ENCODE measurements at regions of chr5 and their contacts with region 1.

Region 1: DNA sequence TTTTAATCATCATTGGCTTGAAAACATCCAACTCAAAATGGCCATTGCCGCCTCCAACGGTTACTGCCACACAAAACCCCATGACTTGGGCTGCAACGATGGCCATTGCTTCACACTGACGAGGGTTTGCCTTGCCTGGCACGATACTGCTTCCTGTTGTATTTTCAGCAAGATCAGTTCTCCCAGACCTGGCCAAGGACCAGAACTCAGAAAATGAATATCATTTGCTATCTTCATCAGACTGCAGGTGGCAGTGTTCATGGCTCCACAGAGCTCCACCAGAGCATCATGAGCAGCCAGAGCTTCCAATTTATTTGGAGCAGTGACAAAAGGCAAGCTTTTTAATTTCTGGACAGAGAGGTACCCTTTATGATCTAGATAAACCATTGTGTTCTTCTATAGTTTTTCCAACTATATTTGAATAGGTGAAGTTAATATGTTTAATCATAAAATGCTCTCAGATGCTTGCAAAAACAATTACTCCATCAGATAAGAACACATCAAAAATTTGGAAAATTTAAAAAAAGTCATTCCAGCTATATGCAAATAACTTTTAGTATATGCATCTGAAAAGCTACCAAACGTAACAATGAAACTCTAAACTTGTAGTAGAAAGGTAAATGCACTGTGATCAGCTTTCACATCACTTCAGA is 10.4 kb downstream of the AMACR start:
- DNase-seq: peak; percentile 58
- H3K4me3 ChIP-seq: no peak overlapping the region; a peak in 1 of 4 replicates
- H3K27ac ChIP-seq: peak overlapping the region in 1 of 2 experiments; percentile 47; a peak in 1 of 4 replicates
- H3K4me1 ChIP-seq: peaks cover 4 to 5% of the 10 kb centered on the region in 2 experiments; a peak in 2 of 4 replicates
- H3K27me3 ChIP-seq: no peaks in the 10 kb centered on the region
- CTCF ChIP-seq: peak; percentile 75
- EP300 ChIP-seq: no peak
- RAD21 ChIP-seq: peak; percentile 74

Region 2: DNA sequence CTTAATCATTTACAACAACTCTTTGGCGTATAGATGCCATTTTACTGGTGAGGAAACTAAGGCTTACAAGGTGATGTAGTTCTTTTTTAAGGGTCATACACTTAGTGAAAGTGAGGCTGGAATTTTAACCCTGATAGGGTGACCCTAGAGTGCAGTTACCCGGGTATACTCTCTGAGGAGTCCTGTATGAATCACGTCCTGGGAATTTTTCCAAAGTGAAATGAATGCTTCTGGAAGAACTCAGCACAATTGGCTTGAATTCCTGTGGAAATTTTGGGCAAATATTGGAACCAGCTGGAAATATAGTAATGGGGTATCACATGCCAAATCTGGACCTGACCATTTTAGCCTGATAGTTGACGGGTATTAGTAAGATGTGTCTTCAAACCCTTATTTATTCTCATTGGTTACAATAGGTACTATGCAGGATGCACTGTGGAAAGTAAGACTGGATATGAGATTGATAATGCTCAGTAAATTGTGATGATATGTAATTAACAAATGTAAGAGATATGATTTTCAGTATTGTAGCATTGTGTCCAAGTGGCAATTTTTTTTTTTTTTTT is 1397.3 kb before region 1 on chr5:
- CTCF ChIA-PET with region 1: no interaction called
- POLR2A ChIA-PET with region 1: no interaction called
- DNase-seq: no peak
- H3K4me3 ChIP-seq: no peak overlapping the region
- H3K27ac ChIP-seq: peak overlapping the region; percentile 81 to 82; a peak in 3 of 4 replicates
- H3K4me1 ChIP-seq: peaks cover 0 to 30% of the 10 kb centered on the region in 2 experiments; a peak in 3 of 4 replicates
- H3K27me3 ChIP-seq: no peaks in the 10 kb centered on the region
- CTCF ChIP-seq: no peak
- EP300 ChIP-seq: peak; percentile 50 to 89; a peak in 3 of 4 replicates
- RAD21 ChIP-seq: no peak

Region 3: DNA sequence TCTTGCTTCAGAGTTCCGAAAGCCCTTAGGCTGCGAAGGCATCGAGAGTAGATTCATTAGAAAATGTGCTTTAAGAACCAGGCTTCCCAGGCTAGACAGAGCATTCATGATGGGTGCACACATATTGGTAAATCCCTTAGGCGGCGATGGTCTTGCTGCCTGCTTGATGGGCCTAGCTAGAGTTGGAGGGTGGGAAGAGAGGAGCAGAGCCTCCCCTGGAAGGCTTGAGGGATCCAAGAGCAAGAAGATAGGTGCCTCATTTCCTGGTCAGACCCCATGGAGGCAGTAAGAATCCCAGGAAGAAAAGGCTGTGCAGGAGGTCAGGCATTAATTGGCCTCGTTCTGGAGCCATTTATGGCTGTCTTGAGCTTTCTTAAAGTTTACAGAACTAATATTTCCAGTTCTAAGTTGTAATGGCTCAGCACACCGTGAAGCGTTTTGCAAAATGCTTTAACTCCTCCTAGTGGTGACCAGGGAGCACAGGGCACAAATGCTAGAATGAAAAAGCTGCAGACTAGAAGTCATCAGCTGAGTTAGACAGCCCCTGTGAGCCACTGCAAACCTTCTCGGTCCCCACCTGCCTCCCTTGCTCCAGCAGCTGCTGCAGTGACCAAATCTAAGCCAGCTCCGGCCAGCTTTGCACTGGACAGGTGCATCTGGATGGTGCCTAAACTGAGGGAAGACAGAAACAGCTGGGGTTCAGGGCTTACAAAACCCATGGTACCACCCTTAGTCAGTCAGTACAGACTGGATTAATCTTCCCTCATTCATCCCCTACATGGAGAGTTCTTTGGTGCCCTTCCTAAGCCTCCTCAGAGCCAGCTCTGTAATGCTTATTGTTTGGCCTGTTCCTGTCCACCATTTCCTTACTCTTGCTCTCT is 27.6 kb before region 1 on chr5:
- CTCF ChIA-PET with region 1: interaction called, 10 read pairs
- POLR2A ChIA-PET with region 1: no interaction called
- DNase-seq: peak; percentile 32
- H3K4me3 ChIP-seq: no peak overlapping the region; a peak in 1 of 4 replicates
- H3K27ac ChIP-seq: no peak overlapping the region
- H3K4me1 ChIP-seq: peaks cover 0 to 7% of the 10 kb centered on the region in 2 experiments; a peak in 1 of 4 replicates
- H3K27me3 ChIP-seq: no peaks in the 10 kb centered on the region
- CTCF ChIP-seq: peak; percentile 68
- EP300 ChIP-seq: no peak
- RAD21 ChIP-seq: peak; percentile 66

Region 4: DNA sequence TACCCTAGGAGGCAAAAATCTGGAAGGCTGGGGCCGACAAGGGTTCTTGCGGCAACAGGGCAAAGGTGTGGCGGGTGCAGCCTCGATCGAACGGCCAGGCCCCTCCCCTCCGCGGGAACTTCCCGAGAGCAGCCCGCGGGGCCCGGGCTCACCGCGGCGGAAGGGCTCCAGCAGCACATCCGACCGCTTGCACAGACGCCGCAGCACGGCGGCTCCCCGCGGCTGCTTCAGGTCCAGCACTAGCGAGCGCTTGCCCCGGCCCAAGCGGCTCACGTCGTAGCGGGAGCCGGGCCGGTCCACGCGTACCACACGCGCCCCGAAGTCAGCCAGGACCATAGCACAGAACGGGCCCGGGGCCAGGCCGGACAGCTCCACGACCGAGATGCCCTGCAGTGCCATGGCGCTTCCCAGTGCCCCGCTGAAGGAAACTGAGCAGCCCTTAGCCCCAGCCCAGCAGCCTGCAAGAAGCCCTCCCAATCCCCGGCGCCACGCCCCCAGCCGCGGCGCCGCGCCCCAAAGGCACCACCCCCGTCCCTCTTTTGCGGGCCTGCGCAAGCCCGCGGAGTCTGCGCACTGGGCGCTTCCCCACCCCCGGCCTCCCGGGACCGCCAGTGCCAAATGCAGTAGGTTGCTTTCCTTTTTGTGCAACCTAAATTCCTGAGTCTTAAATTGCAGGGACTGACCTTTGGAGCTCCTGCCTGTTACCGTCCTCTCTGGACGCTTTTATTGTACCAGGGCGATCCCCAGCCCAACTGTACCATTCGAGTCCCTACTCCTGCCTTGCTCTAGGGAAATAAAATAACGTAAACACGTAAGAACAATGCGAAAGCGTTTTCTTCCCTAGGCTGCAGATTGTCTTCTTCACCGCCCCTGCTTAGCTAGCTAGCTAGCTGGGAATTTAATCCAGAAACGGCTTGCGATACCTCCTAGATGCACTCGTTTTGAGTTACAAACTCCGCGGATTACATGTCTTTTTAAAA is 10.5 kb after region 1 on chr5 and contains the start of gene AMACR:
- CTCF ChIA-PET with region 1: interaction called, 17 read pairs
- POLR2A ChIA-PET with region 1: interaction called, 3 read pairs
- DNase-seq: peak; percentile 93
- H3K4me3 ChIP-seq: peak within 1 kb of the TSS; percentile 84 to 91
- H3K27ac ChIP-seq: peak within 1 kb of the TSS; percentile 89 to 99
- H3K4me1 ChIP-seq: peaks cover 8 to 10% of the 10 kb centered on the region in 2 experiments
- H3K27me3 ChIP-seq: no peaks in the 10 kb centered on the region
- CTCF ChIP-seq: no peak
- EP300 ChIP-seq: no peak
- RAD21 ChIP-seq: no peak
- polyA plus RNA-seq, gene AMACR: 11.8 and 14.0 TPM in 2 replicates

Region 5: GRCh38 chr5:34464830-34465229 is 467.4 kb after region 1 on chr5:
- CTCF ChIA-PET with region 1: interaction called, 13 read pairs
- POLR2A ChIA-PET with region 1: no interaction called
- DNase-seq: no peak
- H3K4me3 ChIP-seq: no peak overlapping the region
- H3K27ac ChIP-seq: no peak overlapping the region
- H3K4me1 ChIP-seq: no peaks in the 10 kb centered on the region
- H3K27me3 ChIP-seq: no peaks in the 10 kb centered on the region
- CTCF ChIP-seq: no peak
- EP300 ChIP-seq: no peak
- RAD21 ChIP-seq: no peak

Measured in SK-N-SH (cell line).